ENCODE measurements at regions of chr11 and their contacts with region 1.

Region 1: GRCh38 chr11:86938900-86939880 is 16.0 kb downstream of the FZD4 start:
- DNase-seq: peak in 4 of 9 donors; percentile 24 to 34 (median 28)
- ATAC-seq: peak; percentile 64
- H3K4me3 ChIP-seq: no peak overlapping the region
- H3K4me3 Mint-ChIP-seq: no peak overlapping the region
- H3K27ac ChIP-seq: no peak overlapping the region
- H3K27ac Mint-ChIP-seq: no peak overlapping the region
- H3K4me1 ChIP-seq: no peaks in the 10 kb centered on the region
- H3K4me1 Mint-ChIP-seq: peaks cover 0 to 2% (median 0%) of the 10 kb centered on the region in 7 donors
- H3K27me3 ChIP-seq: no peaks in the 10 kb centered on the region
- H3K27me3 Mint-ChIP-seq: peaks cover 0 to 9% (median 4%) of the 10 kb centered on the region in 5 donors

Region 2: GRCh38 chr11:86978756-86979608 is 39.8 kb after region 1 on chr11:
- CTCF ChIA-PET with region 1: interaction called, 3 read pairs
- POLR2A ChIA-PET with region 1: no interaction called
- intact Hi-C with region 1: loop called in 1 of 2 experiments (anchors 2 kb)
- DNase-seq: peak in 3 of 9 donors; percentile 22 to 41 (median 27)
- ATAC-seq: peak; percentile 64
- H3K4me3 ChIP-seq: no peak overlapping the region
- H3K4me3 Mint-ChIP-seq: no peak overlapping the region
- H3K27ac ChIP-seq: no peak overlapping the region
- H3K27ac Mint-ChIP-seq: no peak overlapping the region
- H3K4me1 ChIP-seq: no peaks in the 10 kb centered on the region
- H3K4me1 Mint-ChIP-seq: no peaks in the 10 kb centered on the region
- H3K27me3 ChIP-seq: no peaks in the 10 kb centered on the region
- H3K27me3 Mint-ChIP-seq: peaks cover 0 to 7% (median 3%) of the 10 kb centered on the region in 5 donors

Region 3: DNA sequence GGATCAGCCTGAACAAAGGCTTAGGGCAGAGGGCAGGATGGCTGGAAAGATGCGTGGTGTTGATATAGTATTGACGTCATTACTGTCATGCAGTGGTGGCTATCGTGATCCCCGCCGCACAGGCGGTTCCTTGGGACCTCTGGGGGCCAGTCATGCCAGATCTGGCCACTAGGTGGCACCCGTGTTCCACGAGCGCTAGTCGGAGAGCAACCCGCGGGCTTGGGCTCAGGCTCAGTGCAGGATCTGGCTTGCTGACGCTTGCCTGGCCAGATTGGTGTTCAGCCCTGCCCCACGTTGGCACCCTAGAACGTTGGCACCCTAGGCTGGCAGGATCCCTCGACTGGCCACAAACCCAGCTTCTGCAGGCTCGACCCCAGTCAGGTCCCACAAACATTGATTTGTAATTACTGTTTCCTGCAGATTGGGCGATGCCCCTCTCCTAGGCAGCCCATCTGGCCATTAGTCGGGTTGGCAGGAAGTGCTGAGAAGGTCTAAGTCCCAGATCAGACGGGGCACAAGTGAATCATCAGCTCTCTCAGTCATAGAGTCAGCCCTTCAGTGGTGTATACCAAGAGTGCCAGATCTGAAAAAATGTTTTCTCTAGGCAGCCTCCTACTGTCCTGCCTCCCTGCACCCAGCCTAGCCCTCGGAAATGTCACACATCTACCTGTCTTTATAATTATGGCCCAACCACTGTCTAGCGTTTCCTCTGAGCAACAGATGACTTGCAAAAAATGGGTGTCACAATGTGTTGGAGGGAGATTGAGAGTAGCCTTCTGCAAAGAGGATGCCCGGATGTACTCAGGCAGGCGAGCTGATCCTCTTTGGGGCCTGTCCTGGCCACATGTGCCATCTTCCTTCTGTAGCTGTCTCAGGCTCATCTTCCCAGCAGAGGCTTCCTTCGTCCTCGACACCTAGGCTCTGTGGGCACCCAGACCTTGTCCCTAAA is 413.8 kb after region 1 on chr11:
- CTCF ChIA-PET with region 1: interaction called, 3 read pairs
- POLR2A ChIA-PET with region 1: no interaction called
- intact Hi-C with region 1: loop called in 1 of 2 experiments (anchors 1 kb)
- DNase-seq: peak; percentile 58 to 87 (median 74)
- ATAC-seq: peak; percentile 93
- H3K4me3 ChIP-seq: no peak overlapping the region
- H3K4me3 Mint-ChIP-seq: peak overlapping the region in 3 of 10 donors; percentile 12 to 26 (median 21)
- H3K27ac ChIP-seq: no peak overlapping the region
- H3K27ac Mint-ChIP-seq: peak overlapping the region in 1 of 9 donors; percentile 52
- H3K4me1 ChIP-seq: peaks cover 0 to 6% of the 10 kb centered on the region in 2 donors
- H3K4me1 Mint-ChIP-seq: peaks cover 0 to 13% (median 10%) of the 10 kb centered on the region in 7 donors
- H3K27me3 ChIP-seq: peaks cover 0 to 5% of the 10 kb centered on the region in 2 donors
- H3K27me3 Mint-ChIP-seq: peaks cover 5 to 15% (median 9%) of the 10 kb centered on the region in 5 donors